ENCODE measurements at regions of chr3 and their contacts with region 1.

Region 1: DNA sequence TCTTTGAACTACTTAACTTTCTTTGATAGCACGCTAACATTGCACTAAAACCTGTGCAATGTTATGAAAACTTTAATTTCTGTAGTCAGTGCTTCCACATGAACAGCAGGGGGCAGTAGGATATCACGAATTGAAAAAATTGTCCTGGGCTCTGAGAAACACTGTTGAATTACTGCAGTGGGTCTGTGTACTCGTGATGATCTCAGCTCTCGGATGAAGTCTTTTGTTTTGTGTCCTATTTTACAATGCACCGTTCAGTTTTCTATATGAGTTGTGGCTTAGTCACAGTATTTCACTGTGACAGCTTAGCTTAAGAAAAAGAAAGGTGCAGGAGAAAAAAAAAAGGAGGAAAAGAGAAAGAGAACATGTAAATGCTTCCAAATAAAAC is 141.3 kb upstream of the CCDC54 start:
- DNase-seq: peak; percentile 69 to 81
- ATAC-seq: peak; percentile 66 to 72
- H3K4me3 ChIP-seq: peak overlapping the region; percentile 47
- H3K27ac ChIP-seq: peak overlapping the region; percentile 53 to 69
- H3K4me1 ChIP-seq: peaks cover 6% of the 10 kb centered on the region; the same call in 2 of the 3 replicates
- CTCF ChIP-seq: peak; percentile 97
- EP300 ChIP-seq: no peak
- POLR2A ChIP-seq: no peak
- RAD21 ChIP-seq: peak; percentile 95

Region 2: GRCh38 chr3:106518516-106518915 is 717.4 kb before region 1 on chr3:
- CTCF ChIA-PET with region 1: no interaction called
- POLR2A ChIA-PET with region 1: no interaction called
- DNase-seq: peak in 1 of 2 experiments; percentile 67
- ATAC-seq: peak; percentile 62 to 83; a peak in 4 of 6 replicates
- H3K4me3 ChIP-seq: no peak overlapping the region
- H3K27ac ChIP-seq: peak overlapping the region; percentile 39 to 78; a peak in 4 of 6 replicates
- H3K4me1 ChIP-seq: peaks cover 15% of the 10 kb centered on the region; the same call in 2 of the 3 replicates
- CTCF ChIP-seq: no peak
- EP300 ChIP-seq: no peak
- POLR2A ChIP-seq: no peak
- RAD21 ChIP-seq: peak in 1 of 2 experiments; percentile 25; a peak in 1 of 5 replicates

Region 3: GRCh38 chr3:107064445-107065060 is 171.4 kb before region 1 on chr3:
- CTCF ChIA-PET with region 1: no interaction called
- POLR2A ChIA-PET with region 1: no interaction called
- DNase-seq: peak; percentile 62 to 69
- ATAC-seq: peak; percentile 88 to 93
- H3K4me3 ChIP-seq: no peak overlapping the region
- H3K27ac ChIP-seq: no peak overlapping the region
- H3K4me1 ChIP-seq: 0 out of 3 replicates have a peak, but pooled peaks cover 11% of the 10 kb centered on the region
- CTCF ChIP-seq: peak; percentile 87
- EP300 ChIP-seq: no peak
- POLR2A ChIP-seq: no peak
- RAD21 ChIP-seq: peak; percentile 83 to 86

Region 4: GRCh38 chr3:107172411-107172810 is 63.5 kb before region 1 on chr3:
- CTCF ChIA-PET with region 1: no interaction called
- POLR2A ChIA-PET with region 1: no interaction called
- DNase-seq: no peak
- ATAC-seq: no peak
- H3K4me3 ChIP-seq: no peak overlapping the region
- H3K27ac ChIP-seq: no peak overlapping the region
- H3K4me1 ChIP-seq: no peaks in the 10 kb centered on the region
- CTCF ChIP-seq: no peak
- EP300 ChIP-seq: no peak
- POLR2A ChIP-seq: no peak
- RAD21 ChIP-seq: no peak

Region 5: GRCh38 chr3:107206141-107206540 is 29.8 kb before region 1 on chr3:
- CTCF ChIA-PET with region 1: interaction called, 14 read pairs
- POLR2A ChIA-PET with region 1: interaction called, 5 read pairs
- DNase-seq: peak; percentile 36 to 51
- ATAC-seq: peak in 1 of 2 experiments; percentile 85; a peak in 3 of 6 replicates
- H3K4me3 ChIP-seq: no peak overlapping the region
- H3K27ac ChIP-seq: no peak overlapping the region
- H3K4me1 ChIP-seq: peaks cover 29% of the 10 kb centered on the region
- CTCF ChIP-seq: peak; percentile 56
- EP300 ChIP-seq: no peak
- POLR2A ChIP-seq: no peak
- RAD21 ChIP-seq: peak; percentile 56 to 69; a peak in 4 of 5 replicates

Region 6: DNA sequence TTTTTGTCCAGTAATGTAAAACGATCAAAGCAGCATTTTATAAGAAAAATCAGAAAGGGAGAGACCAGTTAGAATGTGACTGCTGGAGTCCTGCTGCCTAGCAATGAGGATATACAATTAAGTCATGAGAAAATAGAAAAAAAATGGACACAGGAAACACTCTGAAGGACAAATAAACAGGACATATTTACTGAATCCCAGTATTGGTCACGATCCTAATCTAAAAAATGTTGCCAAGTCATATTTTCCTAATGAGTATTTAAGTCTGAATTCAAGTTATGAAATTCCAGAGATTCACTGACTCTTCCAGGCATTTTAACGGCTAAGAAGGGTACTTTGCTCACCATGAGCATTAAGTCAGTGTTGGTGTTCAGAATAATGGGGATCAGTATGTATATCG is 13.0 kb before region 1 on chr3:
- CTCF ChIA-PET with region 1: interaction called, 43 read pairs
- POLR2A ChIA-PET with region 1: no interaction called
- DNase-seq: no peak
- ATAC-seq: no peak
- H3K4me3 ChIP-seq: no peak overlapping the region
- H3K27ac ChIP-seq: no peak overlapping the region
- H3K4me1 ChIP-seq: peaks cover 15% of the 10 kb centered on the region; the same call in 2 of the 3 replicates
- CTCF ChIP-seq: no peak
- EP300 ChIP-seq: no peak
- POLR2A ChIP-seq: no peak
- RAD21 ChIP-seq: no peak

Region 7: GRCh38 chr3:107271787-107272387 is 36.0 kb after region 1 on chr3:
- CTCF ChIA-PET with region 1: interaction called, 17 read pairs
- POLR2A ChIA-PET with region 1: no interaction called
- DNase-seq: peak; percentile 21 to 41
- ATAC-seq: peak; percentile 87 to 91
- H3K4me3 ChIP-seq: no peak overlapping the region
- H3K27ac ChIP-seq: no peak overlapping the region
- H3K4me1 ChIP-seq: no peaks in the 10 kb centered on the region
- CTCF ChIP-seq: peak; percentile 73
- EP300 ChIP-seq: no peak
- POLR2A ChIP-seq: no peak
- RAD21 ChIP-seq: peak; percentile 74 to 82

Region 8: DNA sequence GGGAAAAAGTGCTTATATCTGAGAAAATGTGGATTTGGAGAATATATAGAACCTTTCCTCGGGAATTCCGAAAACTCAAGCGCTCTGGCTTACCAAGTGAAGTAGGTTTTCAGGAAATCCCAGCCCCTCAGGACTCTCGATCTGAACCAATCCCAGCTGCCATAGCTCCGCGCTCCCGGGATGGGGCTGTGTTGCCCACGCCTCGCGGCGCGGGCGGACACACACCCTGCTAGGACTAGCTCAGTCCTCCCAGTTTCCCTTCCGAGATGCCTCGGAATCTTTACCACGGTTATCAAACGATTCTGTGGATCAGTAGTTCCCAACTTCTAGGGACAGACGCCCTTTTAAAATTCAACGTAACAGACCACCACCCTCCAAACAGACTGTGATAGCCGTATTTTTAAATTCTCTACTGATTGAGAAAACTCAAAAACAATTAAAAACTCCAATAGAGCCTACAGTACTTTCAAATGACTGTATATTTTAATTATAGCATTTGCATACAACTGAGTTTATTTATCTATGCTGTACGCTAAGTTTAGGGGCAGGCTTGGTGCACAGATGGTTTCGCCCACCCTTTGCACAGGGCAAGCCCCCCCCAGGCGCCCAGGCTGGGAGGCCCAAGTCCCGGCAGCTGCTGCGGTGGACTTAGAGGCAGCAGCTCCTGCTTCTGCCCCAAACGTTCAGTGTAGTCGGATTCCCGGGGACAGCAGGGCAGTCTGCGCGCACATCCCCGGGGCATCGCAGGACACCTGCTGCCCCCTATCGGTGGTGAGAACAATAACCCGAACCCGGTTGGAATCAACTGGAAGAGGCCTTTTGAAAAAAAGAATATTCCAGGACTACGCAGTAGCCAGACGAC is 193.6 kb after region 1 on chr3:
- CTCF ChIA-PET with region 1: interaction called, 41 read pairs
- POLR2A ChIA-PET with region 1: interaction called, 9 read pairs
- DNase-seq: peak; percentile 80 to 92
- ATAC-seq: peak; percentile 69 to 87
- H3K4me3 ChIP-seq: peak overlapping the region; percentile 59
- H3K27ac ChIP-seq: peak overlapping the region; percentile 74 to 95
- H3K4me1 ChIP-seq: peaks cover 16% of the 10 kb centered on the region
- CTCF ChIP-seq: peak; percentile 85
- EP300 ChIP-seq: no peak
- POLR2A ChIP-seq: peak; percentile 50
- RAD21 ChIP-seq: peak; percentile 71

Region 9: GRCh38 chr3:107740992-107741896 is 505.3 kb after region 1 on chr3:
- CTCF ChIA-PET with region 1: interaction called, 12 read pairs
- POLR2A ChIA-PET with region 1: no interaction called
- DNase-seq: peak in 1 of 2 experiments; percentile 23
- ATAC-seq: no peak; a peak in 1 of 6 replicates
- H3K4me3 ChIP-seq: no peak overlapping the region
- H3K27ac ChIP-seq: no peak overlapping the region
- H3K4me1 ChIP-seq: no peaks in the 10 kb centered on the region
- CTCF ChIP-seq: peak; percentile 73
- EP300 ChIP-seq: no peak
- POLR2A ChIP-seq: no peak
- RAD21 ChIP-seq: peak; percentile 64 to 76

Region 10: DNA sequence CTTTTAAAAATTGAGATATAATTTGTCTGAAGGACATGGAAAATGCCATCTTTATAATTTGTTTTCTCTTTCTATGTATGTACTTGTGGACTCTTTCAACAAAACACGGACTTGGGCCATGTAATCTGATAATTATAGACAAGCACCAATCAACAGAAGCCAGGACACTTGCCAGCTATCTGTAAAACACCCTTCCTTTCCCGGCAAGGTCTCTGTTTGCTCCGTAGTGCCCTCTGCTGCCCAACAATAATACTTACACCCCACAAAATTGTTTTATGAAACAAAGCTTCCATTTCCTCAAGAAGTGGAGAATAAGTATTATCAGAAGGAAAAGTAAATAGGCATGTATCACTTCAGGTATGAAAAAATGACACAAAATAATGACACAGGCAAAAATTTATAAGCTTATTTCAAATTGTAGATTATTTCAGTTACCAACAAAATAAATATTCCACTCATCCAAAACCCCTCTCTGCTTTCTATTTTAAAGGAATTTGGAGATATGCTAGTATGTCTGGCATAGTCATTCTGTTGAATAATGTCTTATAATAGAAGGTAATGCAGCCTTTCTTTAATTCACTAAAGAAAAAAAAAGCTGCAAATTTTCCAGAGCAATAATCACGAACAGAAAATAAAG is 1241.7 kb after region 1 on chr3:
- CTCF ChIA-PET with region 1: interaction called, 17 read pairs
- POLR2A ChIA-PET with region 1: no interaction called
- DNase-seq: peak; percentile 13 to 72
- ATAC-seq: peak; percentile 52 to 75; a peak in 3 of 6 replicates
- H3K4me3 ChIP-seq: no peak overlapping the region
- H3K27ac ChIP-seq: no peak overlapping the region
- H3K4me1 ChIP-seq: peaks cover 12% of the 10 kb centered on the region
- CTCF ChIP-seq: peak; percentile 82
- EP300 ChIP-seq: no peak
- POLR2A ChIP-seq: no peak
- RAD21 ChIP-seq: peak; percentile 70 to 75